ENCODE measurements at regions of chr16 and their contacts with region 1.

Region 1: GRCh38 chr16:8797364-8798173 is at the starts of genes PMM2 and TMEM186:
- DNase-seq: peak; percentile 97
- ATAC-seq: peak; percentile 96
- H3K4me3 Mint-ChIP-seq: peak within 1 kb of the TSS; percentile 91
- H3K27ac Mint-ChIP-seq: peak within 1 kb of the TSS; percentile 92
- H3K4me1 Mint-ChIP-seq: peaks cover 34% of the 10 kb centered on the region
- H3K27me3 Mint-ChIP-seq: no peaks in the 10 kb centered on the region
- total RNA-seq, gene PMM2: 38.3 to 39.0 TPM
- total RNA-seq, gene TMEM186: 9.4 to 14.5 TPM

Region 2: DNA sequence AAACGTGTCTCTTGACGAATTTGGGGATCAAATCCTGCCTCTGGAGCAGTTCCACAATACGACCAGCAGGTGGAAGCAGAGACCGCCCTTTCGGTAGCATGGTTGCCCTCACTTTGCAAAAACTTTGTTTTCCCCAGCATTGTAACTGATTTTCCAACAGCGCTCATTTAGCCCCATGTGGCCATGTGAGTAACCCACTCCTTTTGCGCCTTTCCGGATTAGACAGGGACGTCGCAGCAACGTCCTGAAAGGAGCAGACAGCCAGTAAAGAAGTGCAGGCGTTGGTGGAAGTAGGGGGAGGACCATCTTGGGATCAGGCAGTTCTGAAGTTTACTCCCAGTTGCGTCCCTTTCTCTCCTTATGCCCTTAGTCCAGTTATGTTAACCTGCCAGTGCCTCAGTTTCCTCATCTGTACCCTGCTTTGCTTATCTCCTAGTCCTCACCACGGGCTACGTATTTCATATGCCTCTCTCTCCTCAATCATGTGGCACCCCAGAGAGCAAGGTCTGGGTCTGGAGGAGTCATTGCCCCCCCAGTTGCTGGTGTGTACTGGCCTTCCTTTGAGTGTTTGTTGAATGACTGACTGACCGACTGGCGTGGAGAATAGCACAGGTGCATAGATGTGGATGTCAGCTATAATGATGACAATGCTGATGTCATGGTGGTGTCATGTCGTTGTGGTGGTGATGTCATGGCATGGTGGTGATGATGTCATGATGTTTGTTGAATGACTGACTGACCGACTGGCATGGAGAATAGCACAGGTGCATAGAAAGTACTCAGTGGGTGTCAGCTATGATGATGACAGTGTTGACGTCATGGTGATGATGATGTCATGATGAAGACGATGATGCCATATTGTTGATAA is 229.6 kb before region 1 on chr16:
- CTCF ChIA-PET with region 1: interaction called, 4 read pairs
- POLR2A ChIA-PET with region 1: no interaction called
- intact Hi-C with region 1: loop called (anchors 1 to 2 kb)
- DNase-seq: peak; percentile 87
- ATAC-seq: peak; percentile 94
- H3K4me3 Mint-ChIP-seq: no peak overlapping the region
- H3K27ac Mint-ChIP-seq: no peak overlapping the region
- H3K4me1 Mint-ChIP-seq: peaks cover 4% of the 10 kb centered on the region
- H3K27me3 Mint-ChIP-seq: peaks cover 9% of the 10 kb centered on the region

Region 3: DNA sequence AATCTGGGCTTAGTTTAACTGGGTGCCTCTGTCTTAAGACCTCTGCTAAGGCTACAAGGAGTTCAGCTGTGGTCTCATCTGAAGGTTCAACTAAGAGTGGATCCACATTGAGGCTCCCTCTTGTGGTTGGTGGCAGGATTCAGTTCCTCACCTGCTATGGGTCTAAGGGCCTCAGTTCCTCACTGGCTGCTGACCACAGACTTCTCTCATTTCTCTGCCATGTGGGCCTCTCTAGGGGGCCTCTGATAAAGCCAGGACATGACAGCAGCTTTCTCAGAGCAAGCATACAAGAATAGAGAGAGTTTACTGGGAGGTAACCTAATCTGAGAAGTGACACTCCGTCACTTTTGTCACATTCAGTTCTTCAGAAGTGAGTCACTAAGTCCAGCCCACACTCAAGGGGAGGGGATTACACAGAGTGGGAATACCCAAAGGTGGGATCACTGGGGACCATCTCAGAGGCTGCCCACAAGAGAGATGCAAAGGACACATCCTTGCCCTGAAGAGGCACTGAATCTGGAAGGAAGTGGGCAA is 142.3 kb before region 1 on chr16:
- CTCF ChIA-PET with region 1: interaction called, 5 read pairs
- POLR2A ChIA-PET with region 1: interaction called, 3 read pairs
- intact Hi-C with region 1: loop called in 1 of 2 experiments (anchors 5 kb)
- DNase-seq: peak; percentile 74
- ATAC-seq: peak; percentile 93
- H3K4me3 Mint-ChIP-seq: no peak overlapping the region
- H3K27ac Mint-ChIP-seq: no peak overlapping the region
- H3K4me1 Mint-ChIP-seq: peaks cover 17% of the 10 kb centered on the region
- H3K27me3 Mint-ChIP-seq: no peaks in the 10 kb centered on the region

Region 4: GRCh38 chr16:8674413-8675022 is 123.1 kb before region 1 on chr16 and contains the start of gene ABAT:
- CTCF ChIA-PET with region 1: no interaction called
- POLR2A ChIA-PET with region 1: no interaction called
- intact Hi-C with region 1: loop called (anchors 1 kb)
- DNase-seq: peak; percentile 93
- ATAC-seq: peak; percentile 96
- H3K4me3 Mint-ChIP-seq: peak within 1 kb of the TSS; percentile 83
- H3K27ac Mint-ChIP-seq: peak within 1 kb of the TSS; percentile 92
- H3K4me1 Mint-ChIP-seq: peaks cover 18% of the 10 kb centered on the region
- H3K27me3 Mint-ChIP-seq: no peaks in the 10 kb centered on the region
- total RNA-seq, gene ABAT: 5.4 to 6.0 TPM

Region 5: GRCh38 chr16:8868416-8869211 is 71.0 kb after region 1 on chr16 and contains the start of gene CARHSP1:
- CTCF ChIA-PET with region 1: no interaction called
- POLR2A ChIA-PET with region 1: interaction called, 8 read pairs
- intact Hi-C with region 1: loop called (anchors 1 to 2 kb)
- DNase-seq: peak; percentile 92
- ATAC-seq: peak; percentile 72
- H3K4me3 Mint-ChIP-seq: peak within 1 kb of the TSS; percentile 87
- H3K27ac Mint-ChIP-seq: peak within 1 kb of the TSS; percentile 92
- H3K4me1 Mint-ChIP-seq: peaks cover 40% of the 10 kb centered on the region
- H3K27me3 Mint-ChIP-seq: no peaks in the 10 kb centered on the region
- total RNA-seq, gene CARHSP1: 49.4 to 64.5 TPM

Region 6: GRCh38 chr16:9090960-9091866 is 293.6 kb after region 1 on chr16 and contains the start of gene HAPSTR1:
- CTCF ChIA-PET with region 1: no interaction called
- POLR2A ChIA-PET with region 1: interaction called, 5 read pairs
- intact Hi-C with region 1: loop called (anchors 1 to 5 kb)
- DNase-seq: peak; percentile 100
- ATAC-seq: peak; percentile 94
- H3K4me3 Mint-ChIP-seq: peak within 1 kb of the TSS; percentile 89
- H3K27ac Mint-ChIP-seq: peak within 1 kb of the TSS; percentile 95
- H3K4me1 Mint-ChIP-seq: peaks cover 25% of the 10 kb centered on the region
- H3K27me3 Mint-ChIP-seq: no peaks in the 10 kb centered on the region
- total RNA-seq, gene HAPSTR1: 42.4 to 51.4 TPM

Region 7: DNA sequence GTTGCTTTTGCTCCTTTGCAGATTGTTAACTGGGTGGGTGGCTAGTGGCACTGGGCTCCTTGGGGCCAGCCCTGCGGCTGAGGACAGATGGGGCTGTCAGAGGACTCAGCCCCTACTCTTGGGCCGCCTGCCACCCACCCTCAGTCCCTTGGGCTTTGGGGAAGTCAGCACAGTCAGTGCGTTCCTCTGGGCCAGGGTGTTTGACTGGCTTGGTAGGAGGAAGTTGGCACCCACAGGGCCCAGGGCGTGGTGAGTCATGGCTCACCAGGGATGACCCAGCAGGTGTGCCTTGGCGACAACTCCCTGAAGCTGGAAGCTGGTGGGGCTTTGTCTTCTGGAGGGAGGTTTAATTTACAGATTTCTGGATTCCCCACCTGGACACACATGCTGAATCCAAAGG is 326.3 kb after region 1 on chr16:
- CTCF ChIA-PET with region 1: no interaction called
- POLR2A ChIA-PET with region 1: no interaction called
- intact Hi-C with region 1: no loop called
- DNase-seq: peak; percentile 51
- ATAC-seq: no peak
- H3K4me3 Mint-ChIP-seq: no peak overlapping the region
- H3K27ac Mint-ChIP-seq: peak overlapping the region; percentile 55
- H3K4me1 Mint-ChIP-seq: peaks cover 72% of the 10 kb centered on the region
- H3K27me3 Mint-ChIP-seq: no peaks in the 10 kb centered on the region